HAP-1 (cell line): ENCODE measurements at regions of chr2 and their contacts with region 1.

Region 1: GRCh38 chr2:43312755-43313641 is 86.6 kb upstream of the ZFP36L2 start:
- DNase-seq: no peak
- H3K4me3 ChIP-seq: no peak overlapping the region
- H3K4me1 ChIP-seq: no peaks in the 10 kb centered on the region
- H3K27me3 ChIP-seq: no peaks in the 10 kb centered on the region

Region 2: DNA sequence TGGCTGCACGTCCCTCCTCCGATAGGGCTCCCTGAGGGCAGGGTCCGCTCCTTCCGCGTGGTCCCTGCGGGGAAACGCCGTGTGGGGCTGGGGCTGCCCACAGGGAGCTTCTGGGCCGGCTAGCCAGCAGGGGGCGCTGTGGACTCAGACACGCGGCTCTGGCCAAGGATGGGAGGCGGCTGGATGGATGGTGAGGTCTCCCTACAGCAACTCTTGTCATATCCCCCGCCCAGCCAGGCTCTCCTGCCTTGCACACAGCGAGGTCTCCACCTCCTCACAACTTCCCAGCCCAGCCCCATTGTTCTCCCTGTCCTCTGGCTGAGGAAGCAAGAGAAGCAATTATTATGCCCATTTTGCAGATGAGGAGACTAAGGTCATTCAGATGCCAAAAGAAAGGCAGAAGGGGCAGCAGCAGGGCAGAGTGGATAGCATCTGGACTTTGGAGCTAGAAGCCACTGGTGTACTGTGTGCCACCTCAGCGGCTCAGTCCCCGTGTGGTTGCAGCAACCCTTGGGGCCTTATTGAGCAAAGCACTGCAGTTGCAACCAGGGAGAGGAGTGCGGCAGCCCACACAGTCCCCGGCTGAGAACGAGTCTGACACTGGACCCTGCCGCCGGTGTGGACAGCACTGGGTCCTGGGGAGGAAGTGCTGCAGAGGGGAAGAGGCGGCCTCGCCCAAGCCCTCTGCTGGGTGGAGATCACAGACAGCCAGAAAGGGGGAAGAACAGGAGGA is 185.6 kb before region 1 on chr2:
- in situ Hi-C with region 1: loop called (anchors 10 kb)
- DNase-seq: peak; percentile 39 to 87
- H3K4me3 ChIP-seq: no peak overlapping the region
- H3K4me1 ChIP-seq: no peaks in the 10 kb centered on the region
- H3K27me3 ChIP-seq: no peaks in the 10 kb centered on the region